ENCODE measurements at regions of chr5 and their contacts with region 1.

Region 1: DNA sequence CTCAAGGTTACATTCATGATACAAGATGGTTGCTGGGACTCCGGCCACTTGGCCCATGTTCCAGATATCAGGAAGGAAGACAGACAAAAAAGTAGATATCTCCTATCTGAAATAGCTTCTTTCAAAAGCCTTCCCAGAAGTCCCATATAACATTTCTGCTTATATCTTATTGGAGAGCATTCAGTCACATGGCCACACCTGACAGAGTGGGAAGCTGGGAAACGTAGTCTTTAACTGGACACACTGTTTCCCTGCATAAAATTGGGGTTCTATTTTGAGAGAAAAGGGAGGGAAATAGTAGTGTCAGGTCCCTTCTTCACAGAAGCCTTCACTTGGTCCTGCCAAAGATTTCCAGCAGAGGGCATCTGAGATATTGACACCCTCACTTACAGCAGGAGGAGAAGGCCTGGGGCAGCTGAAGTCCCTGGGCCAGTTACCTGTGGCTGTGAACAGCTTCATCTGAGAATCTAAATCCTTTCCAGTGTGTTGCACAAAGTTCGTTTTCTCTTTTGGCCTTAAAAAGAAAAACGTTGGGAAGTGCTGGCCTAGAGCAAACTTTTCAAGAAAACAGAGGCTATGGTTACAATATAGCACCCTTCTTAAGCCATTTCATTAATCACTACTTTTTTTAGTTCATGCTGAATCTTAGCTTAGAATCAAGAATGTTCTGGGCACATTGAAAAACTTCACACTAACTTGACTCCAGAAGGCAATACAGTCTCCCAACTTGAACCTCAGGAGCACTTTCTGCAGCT is 33.5 kb downstream of the SPEF2 start:
- DNase-seq: peak; percentile 29 to 79 (median 63)
- ATAC-seq: peak; percentile 95
- H3K4me3 ChIP-seq: no peak overlapping the region
- H3K4me3 Mint-ChIP-seq: no peak overlapping the region
- H3K27ac ChIP-seq: no peak overlapping the region
- H3K27ac Mint-ChIP-seq: peak overlapping the region; percentile 30
- H3K4me1 ChIP-seq: peaks cover 7% of the 10 kb centered on the region
- H3K4me1 Mint-ChIP-seq: peaks cover 10% of the 10 kb centered on the region
- H3K27me3 ChIP-seq: no peaks in the 10 kb centered on the region
- H3K27me3 Mint-ChIP-seq: no peaks in the 10 kb centered on the region
- CTCF ChIP-seq: peak; percentile 77

Region 2: GRCh38 chr5:35089334-35090314 is 561.6 kb before region 1 on chr5:
- CTCF ChIA-PET with region 1: interaction called, 12 read pairs
- POLR2A ChIA-PET with region 1: no interaction called
- intact Hi-C with region 1: loop called (anchors 2 kb)
- DNase-seq: peak; percentile 16 to 68 (median 57)
- ATAC-seq: no peak
- H3K4me3 ChIP-seq: no peak overlapping the region
- H3K4me3 Mint-ChIP-seq: no peak overlapping the region
- H3K27ac ChIP-seq: no peak overlapping the region
- H3K27ac Mint-ChIP-seq: no peak overlapping the region
- H3K4me1 ChIP-seq: no peaks in the 10 kb centered on the region
- H3K4me1 Mint-ChIP-seq: no peaks in the 10 kb centered on the region
- H3K27me3 ChIP-seq: no peaks in the 10 kb centered on the region
- H3K27me3 Mint-ChIP-seq: peaks cover 3% of the 10 kb centered on the region
- CTCF ChIP-seq: peak; percentile 68

Region 3: GRCh38 chr5:35665096-35665495 is 13.9 kb after region 1 on chr5:
- CTCF ChIA-PET with region 1: interaction called, 24 read pairs
- POLR2A ChIA-PET with region 1: interaction called, 3 read pairs
- intact Hi-C with region 1: no loop called
- DNase-seq: no peak
- ATAC-seq: no peak
- H3K4me3 ChIP-seq: no peak overlapping the region
- H3K4me3 Mint-ChIP-seq: no peak overlapping the region
- H3K27ac ChIP-seq: no peak overlapping the region
- H3K27ac Mint-ChIP-seq: peak overlapping the region; percentile 72
- H3K4me1 ChIP-seq: peaks cover 33% of the 10 kb centered on the region
- H3K4me1 Mint-ChIP-seq: peaks cover 46% of the 10 kb centered on the region
- H3K27me3 ChIP-seq: peaks cover 0 to 3% of the 10 kb centered on the region in 2 experiments
- H3K27me3 Mint-ChIP-seq: no peaks in the 10 kb centered on the region
- CTCF ChIP-seq: no peak

Region 4: DNA sequence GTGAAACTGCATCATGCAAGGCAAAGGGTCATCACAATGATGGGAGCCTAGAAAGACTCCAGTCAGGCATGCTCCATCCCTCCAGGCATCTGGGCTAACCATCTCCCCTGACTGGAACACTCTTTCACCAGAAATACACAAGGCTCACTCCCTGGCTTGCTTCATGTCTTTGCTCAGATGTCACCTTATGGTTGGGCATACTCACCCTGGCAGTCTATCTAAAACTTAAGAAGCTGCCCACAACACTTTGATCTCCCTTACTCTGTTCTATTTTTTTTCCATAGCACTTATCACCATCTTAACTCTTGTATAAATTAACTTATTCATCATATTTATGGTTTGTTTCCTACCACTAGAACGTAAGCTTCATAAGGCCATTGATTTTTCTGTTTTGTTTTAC is 56.5 kb after region 1 on chr5:
- CTCF ChIA-PET with region 1: interaction called, 11 read pairs
- POLR2A ChIA-PET with region 1: no interaction called
- intact Hi-C with region 1: no loop called
- DNase-seq: peak in 2 of 9 experiments; percentile 4 to 21
- ATAC-seq: peak; percentile 20
- H3K4me3 ChIP-seq: no peak overlapping the region
- H3K4me3 Mint-ChIP-seq: no peak overlapping the region
- H3K27ac ChIP-seq: no peak overlapping the region
- H3K27ac Mint-ChIP-seq: peak overlapping the region; percentile 18
- H3K4me1 ChIP-seq: no peaks in the 10 kb centered on the region
- H3K4me1 Mint-ChIP-seq: peaks cover 18% of the 10 kb centered on the region
- H3K27me3 ChIP-seq: no peaks in the 10 kb centered on the region
- H3K27me3 Mint-ChIP-seq: no peaks in the 10 kb centered on the region
- CTCF ChIP-seq: no peak

Region 5: GRCh38 chr5:35852084-35852734 is 201.0 kb after region 1 on chr5:
- CTCF ChIA-PET with region 1: interaction called, 17 read pairs
- POLR2A ChIA-PET with region 1: interaction called, 9 read pairs
- intact Hi-C with region 1: no loop called
- DNase-seq: peak in 5 of 9 experiments; percentile 30 to 83 (median 42)
- ATAC-seq: no peak
- H3K4me3 ChIP-seq: peak overlapping the region; percentile 32 to 47
- H3K4me3 Mint-ChIP-seq: peak overlapping the region; percentile 88
- H3K27ac ChIP-seq: peak overlapping the region; percentile 94 to 97
- H3K27ac Mint-ChIP-seq: peak overlapping the region; percentile 100
- H3K4me1 ChIP-seq: peaks cover 64% of the 10 kb centered on the region
- H3K4me1 Mint-ChIP-seq: peaks cover 80% of the 10 kb centered on the region
- H3K27me3 ChIP-seq: no peaks in the 10 kb centered on the region
- H3K27me3 Mint-ChIP-seq: no peaks in the 10 kb centered on the region
- CTCF ChIP-seq: no peak

Region 6: DNA sequence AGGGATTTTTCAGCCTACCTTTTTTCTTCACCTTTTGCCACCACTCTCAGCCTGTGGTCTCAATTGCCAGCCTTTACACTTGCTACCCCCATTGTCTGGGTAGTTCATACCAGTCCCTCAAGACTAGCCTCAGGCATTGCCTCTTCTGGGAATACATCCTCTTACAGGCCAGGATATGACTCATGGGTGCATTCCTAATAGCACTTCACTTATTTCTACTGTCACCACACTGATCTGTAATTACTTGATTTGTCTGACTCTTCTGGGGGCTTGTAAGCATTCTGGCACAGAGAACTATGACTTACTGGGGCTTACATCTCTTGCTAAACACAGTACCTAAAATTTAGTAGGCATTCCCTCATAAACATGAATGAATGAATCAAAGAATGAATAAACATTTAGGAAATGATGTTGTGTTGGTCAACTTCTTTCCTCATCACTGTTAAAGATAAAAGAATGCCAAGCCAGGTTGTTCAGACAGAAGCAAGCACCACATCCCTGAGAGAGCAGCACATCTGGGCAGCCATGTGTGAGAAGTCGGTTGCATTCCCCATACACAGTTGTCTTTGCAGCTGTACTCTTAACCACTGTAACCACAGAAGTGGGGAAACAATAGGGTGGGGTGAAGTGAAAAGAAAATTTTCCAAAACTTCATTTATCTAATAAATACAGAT is 233.1 kb after region 1 on chr5:
- CTCF ChIA-PET with region 1: interaction called, 14 read pairs
- POLR2A ChIA-PET with region 1: interaction called, 21 read pairs
- intact Hi-C with region 1: no loop called
- DNase-seq: peak in 2 of 9 experiments; percentile 35 to 57
- ATAC-seq: peak; percentile 47
- H3K4me3 ChIP-seq: no peak overlapping the region
- H3K4me3 Mint-ChIP-seq: peak overlapping the region; percentile 3
- H3K27ac ChIP-seq: peak overlapping the region in 1 of 2 experiments; percentile 44
- H3K27ac Mint-ChIP-seq: peak overlapping the region; percentile 89
- H3K4me1 ChIP-seq: peaks cover 26% of the 10 kb centered on the region
- H3K4me1 Mint-ChIP-seq: peaks cover 47% of the 10 kb centered on the region
- H3K27me3 ChIP-seq: no peaks in the 10 kb centered on the region
- H3K27me3 Mint-ChIP-seq: no peaks in the 10 kb centered on the region
- CTCF ChIP-seq: no peak